ENCODE measurements at regions of chr1 and their contacts with region 1.

Region 1: GRCh38 chr1:28369371-28370238 is at the start of gene PHACTR4:
- DNase-seq: peak; percentile 59 to 94
- H3K4me3 ChIP-seq: peak within 1 kb of the TSS; percentile 86 to 89
- H3K27ac ChIP-seq: peak within 1 kb of the TSS; percentile 92 to 94
- H3K4me1 ChIP-seq: peaks cover 8 to 17% of the 10 kb centered on the region in 2 donors
- H3K27me3 ChIP-seq: no peaks in the 10 kb centered on the region
- CTCF ChIP-seq: no peak
- total RNA-seq, gene PHACTR4: 33.0 TPM

Region 2: GRCh38 chr1:28329395-28330153 is 40.0 kb before region 1 on chr1:
- intact Hi-C with region 1: loop called (anchors 5 kb)
- DNase-seq: peak in 1 of 2 donors; percentile 67
- H3K4me3 ChIP-seq: peak overlapping the region; percentile 63 to 71
- H3K27ac ChIP-seq: peak overlapping the region; percentile 75 to 82
- H3K4me1 ChIP-seq: peaks cover 2 to 10% of the 10 kb centered on the region in 2 donors
- H3K27me3 ChIP-seq: no peaks in the 10 kb centered on the region
- CTCF ChIP-seq: peak in 1 of 3 experiments; percentile 11

Region 3: DNA sequence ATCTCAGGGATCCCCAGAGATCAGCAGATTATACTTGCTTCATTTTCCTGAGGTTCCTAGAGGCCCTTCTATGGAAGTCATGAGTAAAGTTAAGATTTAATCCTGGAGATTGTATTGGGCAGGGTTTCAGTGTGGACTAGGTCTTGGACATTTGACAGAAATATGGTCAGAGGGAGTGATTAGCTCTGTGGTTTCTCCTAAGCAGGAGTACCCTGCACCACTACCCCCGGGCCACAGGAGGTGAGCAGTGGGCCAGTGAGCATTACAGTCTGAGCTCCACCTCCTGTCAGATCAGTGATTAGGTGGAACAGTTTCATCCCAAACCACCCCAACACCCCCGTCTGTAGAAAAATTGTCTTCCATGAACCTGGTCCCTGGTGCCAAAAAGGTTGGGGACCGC is 43.1 kb after region 1 on chr1:
- intact Hi-C with region 1: no loop called
- DNase-seq: no peak
- H3K4me3 ChIP-seq: no peak overlapping the region
- H3K27ac ChIP-seq: no peak overlapping the region
- H3K4me1 ChIP-seq: no peaks in the 10 kb centered on the region
- H3K27me3 ChIP-seq: no peaks in the 10 kb centered on the region
- CTCF ChIP-seq: no peak

Region 4: GRCh38 chr1:28437934-28438699 is 68.5 kb after region 1 on chr1:
- intact Hi-C with region 1: loop called (anchors 5 kb)
- DNase-seq: peak; percentile 59 to 93
- H3K4me3 ChIP-seq: peak overlapping the region; percentile 29 to 48
- H3K27ac ChIP-seq: peak overlapping the region; percentile 81 to 85
- H3K4me1 ChIP-seq: peaks cover 11% of the 10 kb centered on the region in 2 donors
- H3K27me3 ChIP-seq: no peaks in the 10 kb centered on the region
- CTCF ChIP-seq: no peak

Measured in ascending aorta (tissue), 2 donors.